ENCODE measurements at regions of chr9 and their contacts with region 1.

Region 1: GRCh38 chr9:34994260-34994899 is 4.8 kb downstream of the DNAJB5 start:
- DNase-seq: peak; percentile 53 to 66
- H3K4me3 ChIP-seq: no peak overlapping the region
- H3K4me3 Mint-ChIP-seq: no peak overlapping the region
- H3K27ac Mint-ChIP-seq: no peak overlapping the region
- H3K4me1 ChIP-seq: peaks cover 29% of the 10 kb centered on the region
- H3K4me1 Mint-ChIP-seq: peaks cover 22% of the 10 kb centered on the region
- H3K27me3 ChIP-seq: no peaks in the 10 kb centered on the region
- H3K27me3 Mint-ChIP-seq: no peaks in the 10 kb centered on the region
- CTCF ChIP-seq: peak; percentile 70 to 77

Region 2: GRCh38 chr9:35051069-35051967 is 56.9 kb after region 1 on chr9:
- CTCF ChIA-PET with region 1: interaction called, 6 read pairs
- POLR2A ChIA-PET with region 1: no interaction called
- intact Hi-C with region 1: loop called (anchors 2 kb)
- DNase-seq: peak; percentile 58 to 66
- H3K4me3 ChIP-seq: no peak overlapping the region
- H3K4me3 Mint-ChIP-seq: no peak overlapping the region
- H3K27ac Mint-ChIP-seq: no peak overlapping the region
- H3K4me1 ChIP-seq: no peaks in the 10 kb centered on the region
- H3K4me1 Mint-ChIP-seq: no peaks in the 10 kb centered on the region
- H3K27me3 ChIP-seq: no peaks in the 10 kb centered on the region
- H3K27me3 Mint-ChIP-seq: no peaks in the 10 kb centered on the region
- CTCF ChIP-seq: peak; percentile 74 to 75

Region 3: DNA sequence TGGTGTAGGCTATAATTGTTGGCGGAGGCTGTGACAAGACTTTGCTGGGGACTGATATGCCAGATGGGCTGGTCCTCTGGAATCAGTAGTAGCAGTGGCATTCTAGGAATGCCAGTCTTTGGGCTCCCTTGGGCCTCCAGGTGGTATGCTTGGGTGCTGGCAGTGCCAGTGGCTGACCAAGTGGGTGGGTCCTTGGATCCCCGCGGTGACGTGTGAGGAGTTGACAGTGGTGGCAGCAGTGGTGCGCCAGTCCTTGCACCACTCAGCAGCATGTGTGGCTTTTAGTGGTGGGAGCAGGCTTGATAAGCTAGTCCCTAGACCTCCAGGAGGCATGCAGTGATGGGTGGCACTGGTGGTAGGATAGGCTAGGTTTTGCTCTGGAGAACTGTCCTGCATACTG is 231.3 kb after region 1 on chr9:
- CTCF ChIA-PET with region 1: no interaction called
- POLR2A ChIA-PET with region 1: no interaction called
- intact Hi-C with region 1: no loop called
- DNase-seq: no peak
- H3K4me3 ChIP-seq: no peak overlapping the region
- H3K4me3 Mint-ChIP-seq: no peak overlapping the region
- H3K27ac Mint-ChIP-seq: no peak overlapping the region
- H3K4me1 ChIP-seq: peaks cover 10% of the 10 kb centered on the region; the same call in 1 of the 2 replicates
- H3K4me1 Mint-ChIP-seq: peaks cover 7% of the 10 kb centered on the region
- H3K27me3 ChIP-seq: no peaks in the 10 kb centered on the region
- H3K27me3 Mint-ChIP-seq: no peaks in the 10 kb centered on the region
- CTCF ChIP-seq: no peak

Measured in Caco-2 (cell line).